ENCODE measurements at regions of chr11 and their contacts with region 1.

Region 1: GRCh38 chr11:8225589-8226036 is 38.1 kb downstream of the LMO1 start:
- DNase-seq: peak; percentile 60 to 79 (median 70)
- ATAC-seq: peak; percentile 29 to 72 (median 58)
- H3K4me3 ChIP-seq: no peak overlapping the region
- H3K27ac ChIP-seq: no peak overlapping the region
- H3K4me1 ChIP-seq: peaks cover 0 to 11% (median 3%) of the 10 kb centered on the region in 12 donors
- H3K27me3 ChIP-seq: no peaks in the 10 kb centered on the region
- CTCF ChIP-seq: peak; percentile 81 to 98 (median 96)
- POLR2A ChIP-seq: no peak

Region 2: GRCh38 chr11:8250981-8251615 is 25.5 kb after region 1 on chr11:
- intact Hi-C with region 1: no loop called
- DNase-seq: no peak
- ATAC-seq: no peak
- H3K4me3 ChIP-seq: no peak overlapping the region
- H3K27ac ChIP-seq: no peak overlapping the region
- H3K4me1 ChIP-seq: no peaks in the 10 kb centered on the region
- H3K27me3 ChIP-seq: peaks cover 0 to 2% (median 0%) of the 10 kb centered on the region in 9 donors
- CTCF ChIP-seq: no peak
- POLR2A ChIP-seq: no peak

Region 3: GRCh38 chr11:8263769-8264410 is 38.3 kb after region 1 on chr11 and contains the start of gene LMO1:
- intact Hi-C with region 1: loop called (anchors 1 to 5 kb)
- DNase-seq: peak; percentile 79 to 87 (median 83)
- ATAC-seq: peak; percentile 67 to 85 (median 78)
- H3K4me3 ChIP-seq: peak within 1 kb of the TSS; percentile 25 to 62 (median 54)
- H3K27ac ChIP-seq: peak within 1 kb of the TSS in 3 of 12 donors; percentile 20 to 62 (median 57)
- H3K4me1 ChIP-seq: peaks cover 3 to 38% (median 21%) of the 10 kb centered on the region in 12 donors
- H3K27me3 ChIP-seq: peaks cover 21 to 81% (median 45%) of the 10 kb centered on the region in 9 donors
- CTCF ChIP-seq: peak; percentile 81 to 90 (median 83)
- POLR2A ChIP-seq: no peak
- total RNA-seq, gene LMO1: 0.75 to 4.1 (median 2.4) TPM in 8 of 9 donors, not detected in the other

Region 4: GRCh38 chr11:8309862-8310261 is 84.2 kb after region 1 on chr11:
- intact Hi-C with region 1: loop called in 4 of 10 experiments (anchors 5 to 10 kb)
- DNase-seq: no peak
- ATAC-seq: peak in 2 of 4 donors; percentile 49 to 59
- H3K4me3 ChIP-seq: no peak overlapping the region
- H3K27ac ChIP-seq: no peak overlapping the region
- H3K4me1 ChIP-seq: no peaks in the 10 kb centered on the region
- H3K27me3 ChIP-seq: no peaks in the 10 kb centered on the region
- CTCF ChIP-seq: peak in 8 of 12 donors; percentile 9 to 36 (median 22)
- POLR2A ChIP-seq: no peak

Region 5: DNA sequence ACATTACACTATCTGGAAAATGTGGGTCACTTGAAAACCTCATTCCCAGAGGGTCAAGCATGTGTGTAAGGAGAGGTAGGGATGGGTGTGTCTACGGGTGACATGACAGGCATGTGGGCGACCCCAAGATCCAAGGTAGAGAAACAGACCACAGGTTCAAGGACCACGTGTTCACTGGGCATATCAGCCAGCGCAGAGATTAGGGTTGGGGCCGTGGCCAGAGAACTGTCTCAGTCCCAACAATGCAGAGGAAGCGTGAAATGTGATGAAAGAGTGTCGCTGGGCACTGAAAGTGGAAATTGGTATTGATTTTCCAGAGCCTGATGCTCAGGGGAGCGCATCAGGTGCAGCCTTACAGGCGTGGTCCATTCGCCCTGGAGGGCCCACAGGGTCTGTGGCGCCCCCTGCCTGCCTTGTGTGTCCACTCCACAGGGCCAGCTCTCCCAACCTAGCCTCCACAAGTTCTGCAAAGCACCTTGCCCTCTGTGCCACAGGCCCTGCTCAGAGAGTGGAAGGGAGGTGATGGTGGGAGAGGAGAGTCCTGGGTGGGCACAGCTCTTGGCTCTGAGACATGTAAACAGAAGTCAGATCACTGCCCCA is 92.8 kb after region 1 on chr11:
- intact Hi-C with region 1: loop called in 5 of 10 experiments (anchors 5 to 10 kb)
- DNase-seq: no peak
- ATAC-seq: peak in 1 of 4 donors; percentile 52
- H3K4me3 ChIP-seq: no peak overlapping the region
- H3K27ac ChIP-seq: no peak overlapping the region
- H3K4me1 ChIP-seq: no peaks in the 10 kb centered on the region
- H3K27me3 ChIP-seq: peaks cover 0 to 6% (median 0%) of the 10 kb centered on the region in 9 donors
- CTCF ChIP-seq: peak in 7 of 12 donors; percentile 11 to 43 (median 30)
- POLR2A ChIP-seq: no peak

Region 6: GRCh38 chr11:8328848-8329330 is 103.3 kb after region 1 on chr11:
- intact Hi-C with region 1: loop called in 1 of 10 experiments (anchors 10 kb)
- DNase-seq: peak; percentile 64 to 88 (median 80)
- ATAC-seq: peak; percentile 78 to 91 (median 84)
- H3K4me3 ChIP-seq: peak overlapping the region in 10 of 12 donors; percentile 5 to 47 (median 35)
- H3K27ac ChIP-seq: peak overlapping the region in 1 of 12 donors; percentile 48
- H3K4me1 ChIP-seq: peaks cover 0 to 20% (median 6%) of the 10 kb centered on the region in 12 donors
- H3K27me3 ChIP-seq: peaks cover 0 to 11% (median 0%) of the 10 kb centered on the region in 9 donors
- CTCF ChIP-seq: peak; percentile 53 to 81 (median 65)
- POLR2A ChIP-seq: no peak

Region 7: GRCh38 chr11:8566613-8567210 is 341.1 kb after region 1 on chr11:
- intact Hi-C with region 1: loop called (anchors 1 to 5 kb)
- DNase-seq: no peak
- ATAC-seq: peak in 2 of 4 donors; percentile 22 to 29
- H3K4me3 ChIP-seq: no peak overlapping the region
- H3K27ac ChIP-seq: no peak overlapping the region
- H3K4me1 ChIP-seq: no peaks in the 10 kb centered on the region
- H3K27me3 ChIP-seq: peaks cover 0 to 5% (median 0%) of the 10 kb centered on the region in 9 donors
- CTCF ChIP-seq: peak; percentile 52 to 86 (median 71)
- POLR2A ChIP-seq: no peak

Region 8: GRCh38 chr11:9137293-9138132 is 911.9 kb after region 1 on chr11:
- intact Hi-C with region 1: loop called in 1 of 10 experiments (anchors 10 kb)
- DNase-seq: peak; percentile 67 to 82 (median 70)
- ATAC-seq: peak; percentile 84 to 92 (median 91)
- H3K4me3 ChIP-seq: no peak overlapping the region
- H3K27ac ChIP-seq: no peak overlapping the region
- H3K4me1 ChIP-seq: peaks cover 0 to 34% (median 12%) of the 10 kb centered on the region in 12 donors
- H3K27me3 ChIP-seq: no peaks in the 10 kb centered on the region
- CTCF ChIP-seq: peak; percentile 89 to 98 (median 92)
- POLR2A ChIP-seq: no peak